ENCODE measurements at regions of chr4 and their contacts with region 1.

Region 1: GRCh38 chr4:159175085-159175988 is 72.5 kb downstream of the RAPGEF2 start:
- DNase-seq: peak; percentile 20
- ATAC-seq: peak; percentile 84
- H3K4me3 Mint-ChIP-seq: no peak overlapping the region
- H3K27ac Mint-ChIP-seq: no peak overlapping the region
- H3K4me1 Mint-ChIP-seq: peaks cover 60% of the 10 kb centered on the region
- H3K27me3 Mint-ChIP-seq: peaks cover 10% of the 10 kb centered on the region
- CTCF ChIP-seq: peak; percentile 72

Region 2: DNA sequence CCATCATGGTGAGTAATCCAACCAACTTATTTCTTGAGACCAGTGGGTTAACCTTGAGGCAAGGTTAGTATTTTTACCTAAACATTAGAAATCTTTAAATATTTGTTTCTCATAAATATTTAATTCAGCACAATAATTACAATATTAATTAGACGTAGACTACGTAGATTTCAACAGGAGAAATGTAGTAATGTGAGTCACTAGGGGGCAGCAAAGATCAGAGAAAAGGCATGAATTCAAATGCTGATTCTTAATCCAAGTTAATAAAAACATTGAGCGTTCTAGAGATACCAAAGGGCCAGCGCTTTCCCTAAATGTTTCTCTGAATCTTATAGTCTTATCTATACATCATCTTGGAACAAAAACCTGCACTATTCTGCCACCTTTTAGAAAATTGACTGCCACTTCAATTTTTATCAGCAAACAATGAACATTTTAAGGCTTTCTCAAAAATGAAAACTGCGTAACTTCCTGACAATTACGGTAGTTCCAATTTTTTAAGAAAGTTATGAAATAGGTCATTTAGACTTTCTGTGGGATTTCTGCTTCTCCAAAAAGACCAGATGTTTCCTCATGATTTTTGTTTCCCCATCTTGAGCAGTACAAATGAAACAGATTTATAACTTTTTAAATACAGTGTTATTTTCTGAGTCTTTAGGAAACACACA is 1183.2 kb before region 1 on chr4:
- CTCF ChIA-PET with region 1: no interaction called
- POLR2A ChIA-PET with region 1: no interaction called
- intact Hi-C with region 1: loop called (anchors 10 kb)
- DNase-seq: no peak
- ATAC-seq: no peak
- H3K4me3 Mint-ChIP-seq: no peak overlapping the region
- H3K27ac Mint-ChIP-seq: no peak overlapping the region
- H3K4me1 Mint-ChIP-seq: no peaks in the 10 kb centered on the region
- H3K27me3 Mint-ChIP-seq: peaks cover 2% of the 10 kb centered on the region
- CTCF ChIP-seq: no peak

Region 3: DNA sequence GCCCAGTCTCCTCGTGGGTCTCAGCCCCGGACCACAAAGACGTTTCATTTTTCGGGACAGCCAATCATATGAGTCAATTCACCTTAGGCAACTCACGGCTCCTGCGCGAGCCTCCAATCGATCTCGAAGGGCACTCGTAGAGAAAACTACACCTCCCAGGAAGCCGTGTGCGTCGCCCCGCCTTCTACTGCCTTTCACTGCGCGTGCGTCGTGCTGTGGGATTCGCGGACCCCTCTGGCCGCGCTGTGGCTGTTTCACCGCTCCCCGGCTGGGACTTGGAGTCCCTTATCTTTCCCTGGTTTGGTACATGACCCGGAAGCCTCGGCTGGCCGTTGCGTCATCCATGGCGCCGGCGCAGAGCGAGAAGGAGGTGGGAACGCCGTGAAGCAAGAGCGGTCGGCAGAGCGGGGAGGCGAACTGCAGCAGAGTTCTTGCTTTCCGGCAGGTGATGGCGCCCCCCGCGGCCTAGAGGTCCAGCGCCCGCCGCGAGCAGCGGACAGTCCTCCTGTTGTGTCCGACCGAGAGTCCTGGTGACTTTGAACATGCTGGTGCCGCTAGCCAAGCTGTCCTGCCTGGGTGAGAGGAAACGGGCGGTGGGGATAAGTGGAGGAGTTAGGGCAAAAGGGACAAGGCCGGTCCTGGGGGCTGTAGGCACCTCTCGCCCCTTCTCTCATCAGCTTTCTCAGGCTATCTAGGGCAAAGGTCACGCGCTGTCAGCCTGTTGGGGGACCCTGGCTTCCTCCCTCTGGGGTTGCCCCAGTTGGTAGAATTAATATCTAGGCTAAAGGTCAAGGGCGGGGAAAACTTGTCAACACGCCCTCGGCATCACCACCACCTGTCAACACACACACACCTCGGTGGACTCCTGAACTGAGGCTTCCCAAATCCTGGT is 503.2 kb before region 1 on chr4 and contains the start of gene ETFDH:
- CTCF ChIA-PET with region 1: no interaction called
- POLR2A ChIA-PET with region 1: no interaction called
- intact Hi-C with region 1: loop called (anchors 2 kb)
- DNase-seq: peak; percentile 95
- ATAC-seq: peak; percentile 83
- H3K4me3 Mint-ChIP-seq: peak within 1 kb of the TSS; percentile 98
- H3K27ac Mint-ChIP-seq: peak within 1 kb of the TSS; percentile 96
- H3K4me1 Mint-ChIP-seq: peaks cover 23% of the 10 kb centered on the region
- H3K27me3 Mint-ChIP-seq: no peaks in the 10 kb centered on the region
- CTCF ChIP-seq: no peak
- total RNA-seq, gene ETFDH: 12.0 and 15.4 TPM in 2 replicates

Region 4: DNA sequence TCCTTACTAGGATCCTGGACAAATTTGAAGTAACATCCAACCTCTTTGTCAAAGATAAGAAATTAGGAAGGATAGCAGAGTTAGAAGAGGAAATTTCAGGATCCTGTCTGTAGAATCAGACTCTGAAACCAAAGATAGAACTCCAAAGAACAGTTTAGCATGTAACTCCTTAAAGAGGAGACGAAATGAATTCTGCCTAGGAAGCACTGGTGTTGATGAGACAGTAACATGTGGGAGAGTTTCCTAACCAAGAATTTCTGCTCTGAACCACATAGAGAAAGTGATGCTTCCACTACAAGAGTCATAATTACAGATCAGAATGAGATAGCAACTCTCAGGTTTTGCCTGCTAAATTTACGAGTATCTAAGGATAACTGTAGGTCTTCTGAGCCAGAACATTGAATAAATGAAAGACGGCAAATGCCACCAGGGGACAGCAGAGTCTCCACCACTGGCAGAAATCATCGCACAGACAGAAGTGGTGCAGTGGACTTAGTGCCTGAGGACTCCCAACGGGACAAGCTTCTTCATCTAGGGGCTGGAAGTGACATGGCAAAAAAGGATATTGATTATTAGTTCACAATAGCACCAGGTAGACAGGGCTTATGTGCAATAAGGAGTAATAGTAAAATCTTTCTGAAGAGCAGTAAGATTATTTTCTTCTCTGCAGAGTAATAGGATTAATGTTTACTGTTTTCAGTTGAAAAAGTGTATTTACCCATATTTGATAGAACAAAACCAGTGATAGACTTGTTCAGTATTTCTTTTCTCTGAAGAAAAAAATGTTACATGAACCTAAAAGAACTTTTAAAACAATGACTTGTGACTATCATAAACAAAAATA is 445.4 kb before region 1 on chr4:
- CTCF ChIA-PET with region 1: no interaction called
- POLR2A ChIA-PET with region 1: no interaction called
- intact Hi-C with region 1: loop called (anchors 1 kb)
- DNase-seq: no peak
- ATAC-seq: peak; percentile 40
- H3K4me3 Mint-ChIP-seq: no peak overlapping the region
- H3K27ac Mint-ChIP-seq: no peak overlapping the region
- H3K4me1 Mint-ChIP-seq: no peaks in the 10 kb centered on the region
- H3K27me3 Mint-ChIP-seq: peaks cover 37% of the 10 kb centered on the region
- CTCF ChIP-seq: no peak

Region 5: DNA sequence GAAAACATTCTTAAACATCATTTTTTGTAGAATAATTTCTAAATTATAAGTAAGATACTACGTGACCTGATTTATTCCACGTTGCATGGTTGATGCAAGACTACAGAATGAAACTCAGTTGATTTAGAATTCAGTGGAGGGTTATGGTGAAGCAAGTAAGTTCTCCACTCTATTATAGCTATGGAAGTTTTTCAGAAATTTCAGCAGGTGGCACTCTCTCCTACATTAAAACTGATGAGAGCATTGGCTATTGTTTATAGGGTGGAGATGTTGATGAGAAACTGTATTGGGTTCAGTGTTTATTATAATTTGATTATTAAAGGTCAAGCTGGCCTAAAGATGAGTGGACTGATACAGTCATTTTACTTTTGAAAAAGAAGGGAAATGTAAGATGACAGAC is 318.5 kb before region 1 on chr4:
- CTCF ChIA-PET with region 1: interaction called, 30 read pairs
- POLR2A ChIA-PET with region 1: no interaction called
- intact Hi-C with region 1: loop called (anchors 1 kb)
- DNase-seq: no peak
- ATAC-seq: peak; percentile 72
- H3K4me3 Mint-ChIP-seq: no peak overlapping the region
- H3K27ac Mint-ChIP-seq: no peak overlapping the region
- H3K4me1 Mint-ChIP-seq: peaks cover 3% of the 10 kb centered on the region
- H3K27me3 Mint-ChIP-seq: peaks cover 20% of the 10 kb centered on the region
- CTCF ChIP-seq: peak; percentile 66

Region 6: DNA sequence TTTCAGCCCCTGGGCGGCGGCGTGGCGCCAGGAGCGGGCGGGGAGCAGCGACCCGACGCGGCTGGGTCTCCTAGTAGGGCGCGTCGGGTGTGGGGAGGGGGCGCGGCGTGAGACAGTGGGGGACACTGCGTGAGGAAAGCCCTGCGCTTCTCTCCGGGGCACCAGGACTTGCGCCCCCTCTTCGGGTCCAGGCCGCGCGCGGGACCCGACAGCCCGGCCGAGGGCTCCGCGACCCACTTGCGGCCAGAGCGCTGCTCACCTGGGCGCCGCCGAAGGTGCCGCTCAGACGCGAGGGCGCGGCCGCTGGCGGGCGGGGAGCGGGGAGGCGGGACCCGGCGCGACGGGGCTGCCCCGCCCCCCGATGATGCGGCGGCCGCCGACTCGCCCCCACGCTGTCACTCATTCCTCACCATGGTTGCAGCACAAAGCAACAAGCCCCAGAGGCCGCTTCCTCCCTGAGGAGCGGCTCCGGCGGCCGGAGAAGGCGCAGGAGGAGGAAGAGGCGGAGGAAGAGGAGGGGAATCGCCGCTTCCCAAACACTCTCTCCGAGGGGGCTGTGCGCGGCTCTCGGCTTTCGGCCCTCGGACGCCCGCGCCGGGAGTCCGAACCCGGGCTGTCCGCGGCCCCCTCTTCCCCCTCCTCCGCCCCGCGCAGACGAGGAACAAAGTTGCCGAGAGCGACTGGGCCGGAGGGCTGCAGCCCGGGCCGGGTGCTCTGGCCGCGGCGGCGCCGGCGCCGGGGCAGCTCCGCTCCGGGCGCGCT is 72.5 kb before region 1 on chr4 and contains the start of gene RAPGEF2:
- CTCF ChIA-PET with region 1: no interaction called
- POLR2A ChIA-PET with region 1: interaction called, 4 read pairs
- intact Hi-C with region 1: loop called (anchors 1 kb)
- DNase-seq: peak; percentile 85
- ATAC-seq: peak; percentile 83
- H3K4me3 Mint-ChIP-seq: peak within 1 kb of the TSS; percentile 84
- H3K27ac Mint-ChIP-seq: peak within 1 kb of the TSS; percentile 79
- H3K4me1 Mint-ChIP-seq: peaks cover 35% of the 10 kb centered on the region
- H3K27me3 Mint-ChIP-seq: peaks cover 1% of the 10 kb centered on the region
- CTCF ChIP-seq: no peak
- total RNA-seq, gene RAPGEF2: 18.1 and 22.9 TPM in 2 replicates

Region 7: DNA sequence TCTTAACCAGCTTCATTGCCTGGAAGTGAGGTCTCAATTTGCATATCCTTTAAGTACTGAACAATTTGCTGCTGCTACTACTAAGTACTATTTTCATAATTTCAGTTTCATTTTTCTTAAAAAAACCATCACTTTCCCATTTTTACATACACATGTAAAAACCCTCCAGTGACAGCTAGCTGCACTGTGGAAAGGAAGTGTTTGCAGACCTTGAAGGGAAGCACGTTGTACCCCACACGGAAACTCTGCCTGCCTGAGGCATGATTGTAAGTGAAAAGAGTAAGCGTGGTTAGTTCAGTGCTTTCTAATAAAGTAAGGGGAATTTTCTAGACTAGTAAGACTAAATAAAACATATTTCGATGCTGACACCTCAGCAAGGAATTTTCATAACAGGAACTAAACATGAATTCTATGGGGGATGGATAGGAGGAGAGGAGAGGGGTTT is 31.1 kb after region 1 on chr4:
- CTCF ChIA-PET with region 1: interaction called, 20 read pairs
- POLR2A ChIA-PET with region 1: interaction called, 3 read pairs
- intact Hi-C with region 1: loop called (anchors 1 kb)
- DNase-seq: no peak
- ATAC-seq: peak; percentile 65
- H3K4me3 Mint-ChIP-seq: peak overlapping the region; percentile 46
- H3K27ac Mint-ChIP-seq: peak overlapping the region; percentile 8
- H3K4me1 Mint-ChIP-seq: peaks cover 20% of the 10 kb centered on the region
- H3K27me3 Mint-ChIP-seq: no peaks in the 10 kb centered on the region
- CTCF ChIP-seq: no peak

Region 8: GRCh38 chr4:159823743-159824142 is 648.4 kb after region 1 on chr4:
- CTCF ChIA-PET with region 1: no interaction called
- POLR2A ChIA-PET with region 1: no interaction called
- intact Hi-C with region 1: no loop called
- DNase-seq: no peak
- ATAC-seq: no peak
- H3K4me3 Mint-ChIP-seq: no peak overlapping the region
- H3K27ac Mint-ChIP-seq: no peak overlapping the region
- H3K4me1 Mint-ChIP-seq: no peaks in the 10 kb centered on the region
- H3K27me3 Mint-ChIP-seq: no peaks in the 10 kb centered on the region
- CTCF ChIP-seq: no peak

Measured in activated B cell treated with CpG ODN at 0.5 μM for 24 hours (primary cell).